ENCODE measurements at regions of chr20 and their contacts with region 1.

Region 1: DNA sequence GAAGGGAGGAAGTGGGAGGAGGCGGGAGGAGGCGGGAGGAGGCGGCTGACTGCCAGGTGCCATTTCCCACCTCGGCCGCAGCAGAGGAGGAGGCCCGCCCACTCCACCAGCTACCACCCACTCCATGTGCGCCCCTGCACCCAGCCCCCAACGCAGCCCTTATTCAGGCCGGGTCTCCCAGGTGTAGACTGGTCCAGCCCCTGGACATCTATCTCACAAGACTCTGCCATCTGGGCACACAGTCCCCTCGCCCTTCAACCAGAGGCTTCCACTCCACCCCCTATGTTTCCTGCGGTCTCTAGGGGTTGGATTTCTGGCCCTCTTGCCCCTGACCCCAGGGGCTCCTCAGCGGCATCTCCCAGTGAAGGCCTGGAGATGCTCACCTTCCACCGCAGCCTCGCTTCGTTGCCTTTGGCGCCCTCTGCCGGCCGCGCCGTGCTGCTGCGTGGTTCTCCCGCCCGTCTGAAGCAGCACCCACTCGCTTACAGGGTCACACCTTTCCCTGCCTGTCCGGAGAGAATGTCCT is 32.6 kb upstream of the FAM83D start:
- DNase-seq: peak; percentile 88

Region 2: GRCh38 chr20:37764333-37764935 is 1129.2 kb before region 1 on chr20:
- intact Hi-C with region 1: no loop called
- DNase-seq: no peak

Region 3: DNA sequence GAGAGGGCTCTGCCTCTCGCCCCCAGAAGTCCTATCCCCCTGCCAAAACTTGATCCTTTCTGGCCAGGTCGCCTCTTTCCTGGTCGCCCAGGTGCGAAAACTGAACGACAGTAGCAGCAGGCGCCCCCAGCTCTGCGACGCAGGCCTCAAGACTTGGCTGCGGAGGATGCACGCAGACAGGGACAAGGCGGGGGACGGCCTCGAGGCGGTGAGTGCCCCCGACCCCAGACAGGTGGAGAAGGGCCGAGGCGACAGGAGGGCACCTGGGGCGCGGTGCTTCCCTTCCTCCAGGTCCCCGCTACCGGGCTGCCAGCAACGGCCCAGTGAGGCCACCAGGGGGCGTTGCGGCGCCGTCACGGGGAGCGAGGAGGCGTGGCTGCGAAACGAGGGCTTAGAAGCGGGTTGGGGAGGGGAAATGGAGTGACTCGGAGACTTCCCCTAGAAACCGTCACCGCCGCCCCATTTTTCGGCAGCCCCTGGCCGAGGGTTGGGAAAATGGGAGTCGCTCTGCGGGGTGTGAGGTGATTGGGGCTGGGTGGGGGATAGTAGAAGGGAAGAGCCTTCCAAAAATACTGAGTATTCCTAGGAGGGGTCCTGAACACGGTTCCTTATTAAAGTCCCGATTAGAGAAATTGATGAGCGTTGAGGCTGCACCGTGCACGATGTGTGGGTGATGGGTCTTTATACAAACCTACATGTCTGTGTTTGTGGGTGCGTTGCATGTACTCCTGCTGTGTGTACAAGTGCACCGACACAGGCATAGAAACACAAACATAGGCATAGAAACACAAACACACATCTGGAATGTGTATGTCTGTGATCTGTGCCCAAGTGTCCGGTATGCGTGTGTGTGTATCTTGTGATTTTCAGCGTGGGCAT is 247.4 kb before region 1 on chr20:
- intact Hi-C with region 1: loop called (anchors 5 kb)
- DNase-seq: peak; percentile 93

Measured in posterior vena cava (tissue), 2 donors.